A549 (cell line): ENCODE measurements at regions of chr1 and their contacts with region 1.

Region 1: DNA sequence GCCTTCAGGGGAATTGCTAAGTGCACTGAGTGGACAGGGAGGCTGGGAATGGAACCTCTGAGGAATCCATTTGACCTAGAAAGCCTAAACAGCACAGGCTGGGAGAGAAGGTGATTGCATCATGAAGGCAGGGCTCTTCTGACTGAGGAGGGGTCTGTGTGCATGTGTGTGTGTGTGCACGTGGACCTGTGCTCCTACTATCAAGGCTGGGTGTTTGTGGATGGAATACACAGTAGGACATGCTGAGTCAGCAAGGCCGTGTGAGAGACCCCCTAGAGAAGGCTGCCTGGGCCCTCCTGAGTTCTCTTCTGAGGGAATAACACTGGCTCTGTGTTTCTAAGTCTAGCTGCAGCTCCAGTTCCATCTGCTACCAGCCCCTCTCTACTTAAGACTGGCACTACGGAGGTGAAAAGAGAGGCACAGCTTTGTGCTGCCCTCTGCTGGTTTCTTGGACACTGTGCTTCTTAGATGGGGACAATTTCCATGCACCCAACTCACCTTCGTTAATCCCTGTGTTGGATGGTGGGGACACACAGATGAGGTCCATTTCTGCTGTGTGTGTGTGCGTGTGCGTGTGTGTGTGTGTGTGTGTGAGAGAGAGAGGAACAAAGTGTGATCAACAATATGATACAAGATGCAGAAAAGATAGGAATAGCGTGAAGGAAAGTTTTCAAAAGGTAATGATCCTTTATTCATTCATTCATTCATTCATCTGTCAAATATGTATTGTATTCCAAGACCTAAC is 6.2 kb upstream of the EFCAB14 start:
- DNase-seq: peak; percentile 36 to 80
- ATAC-seq: peak; percentile 95 to 99
- H3K4me3 ChIP-seq: no peak overlapping the region
- H3K27ac ChIP-seq: no peak overlapping the region
- H3K4me1 ChIP-seq: no peaks in the 10 kb centered on the region
- CTCF ChIP-seq: peak; percentile 68
- EP300 ChIP-seq: no peak
- POLR2A ChIP-seq: no peak
- RAD21 ChIP-seq: peak; percentile 69 to 70

Region 2: GRCh38 chr1:46622344-46622743 is 102.8 kb before region 1 on chr1:
- CTCF ChIA-PET with region 1: interaction called, 35 read pairs
- POLR2A ChIA-PET with region 1: no interaction called
- DNase-seq: peak; percentile 43 to 44
- ATAC-seq: peak; percentile 74 to 88; a peak in 5 of 6 replicates
- H3K4me3 ChIP-seq: no peak overlapping the region
- H3K27ac ChIP-seq: no peak overlapping the region
- H3K4me1 ChIP-seq: no peaks in the 10 kb centered on the region
- CTCF ChIP-seq: peak; percentile 47
- EP300 ChIP-seq: no peak
- POLR2A ChIP-seq: no peak
- RAD21 ChIP-seq: peak; percentile 51 to 64

Region 3: DNA sequence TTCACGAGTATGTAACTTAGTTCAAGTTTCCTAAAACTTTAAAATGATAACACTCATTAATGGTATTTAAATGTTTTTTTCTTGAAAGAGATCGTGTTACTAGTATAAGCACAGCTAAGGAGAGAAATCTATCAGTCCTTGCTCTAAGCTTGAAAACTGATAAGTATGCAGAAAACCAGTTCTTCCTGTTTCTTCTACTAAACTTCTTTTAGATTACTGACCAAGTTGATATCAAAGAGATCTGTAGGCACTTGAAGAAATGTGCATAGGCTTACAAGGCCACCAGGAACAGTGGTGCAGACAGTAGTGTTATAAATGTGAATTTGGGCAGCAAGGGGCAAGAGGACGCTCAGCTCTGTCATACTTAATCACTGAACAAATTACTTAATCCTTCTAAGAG is 10.2 kb before region 1 on chr1:
- CTCF ChIA-PET with region 1: interaction called, 11 read pairs
- POLR2A ChIA-PET with region 1: interaction called, 3 read pairs
- DNase-seq: no peak
- ATAC-seq: no peak
- H3K4me3 ChIP-seq: no peak overlapping the region
- H3K27ac ChIP-seq: no peak overlapping the region
- H3K4me1 ChIP-seq: peaks cover 21% of the 10 kb centered on the region; the same call in 2 of the 3 replicates
- CTCF ChIP-seq: no peak
- EP300 ChIP-seq: no peak
- POLR2A ChIP-seq: no peak
- RAD21 ChIP-seq: no peak

Region 4: GRCh38 chr1:47067097-47067594 is 342.0 kb after region 1 on chr1 and contains the start of gene CYP4Z1:
- CTCF ChIA-PET with region 1: no interaction called
- POLR2A ChIA-PET with region 1: no interaction called
- DNase-seq: no peak
- ATAC-seq: no peak
- H3K4me3 ChIP-seq: no peak within 1 kb of the TSS
- H3K27ac ChIP-seq: no peak within 1 kb of the TSS
- H3K4me1 ChIP-seq: no peaks in the 10 kb centered on the region
- CTCF ChIP-seq: no peak
- EP300 ChIP-seq: no peak
- POLR2A ChIP-seq: no peak
- RAD21 ChIP-seq: no peak
- polyA plus RNA-seq, gene CYP4Z1: not detected in 2 replicates